Activated naive CD4-positive, alpha-beta T cell treated with anti-CD3 and anti-CD28 coated beads for 36 hours (primary cell): ENCODE measurements at regions of chr1 and their contacts with region 1.

Region 1: GRCh38 chr1:8423650-8424538 is 106.0 kb downstream of the SLC45A1 start:
- DNase-seq: peak; percentile 62
- H3K4me3 Mint-ChIP-seq: peak overlapping the region; percentile 85
- H3K27ac Mint-ChIP-seq: peak overlapping the region; percentile 97
- H3K4me1 Mint-ChIP-seq: peaks cover 38% of the 10 kb centered on the region
- H3K27me3 Mint-ChIP-seq: no peaks in the 10 kb centered on the region

Region 2: DNA sequence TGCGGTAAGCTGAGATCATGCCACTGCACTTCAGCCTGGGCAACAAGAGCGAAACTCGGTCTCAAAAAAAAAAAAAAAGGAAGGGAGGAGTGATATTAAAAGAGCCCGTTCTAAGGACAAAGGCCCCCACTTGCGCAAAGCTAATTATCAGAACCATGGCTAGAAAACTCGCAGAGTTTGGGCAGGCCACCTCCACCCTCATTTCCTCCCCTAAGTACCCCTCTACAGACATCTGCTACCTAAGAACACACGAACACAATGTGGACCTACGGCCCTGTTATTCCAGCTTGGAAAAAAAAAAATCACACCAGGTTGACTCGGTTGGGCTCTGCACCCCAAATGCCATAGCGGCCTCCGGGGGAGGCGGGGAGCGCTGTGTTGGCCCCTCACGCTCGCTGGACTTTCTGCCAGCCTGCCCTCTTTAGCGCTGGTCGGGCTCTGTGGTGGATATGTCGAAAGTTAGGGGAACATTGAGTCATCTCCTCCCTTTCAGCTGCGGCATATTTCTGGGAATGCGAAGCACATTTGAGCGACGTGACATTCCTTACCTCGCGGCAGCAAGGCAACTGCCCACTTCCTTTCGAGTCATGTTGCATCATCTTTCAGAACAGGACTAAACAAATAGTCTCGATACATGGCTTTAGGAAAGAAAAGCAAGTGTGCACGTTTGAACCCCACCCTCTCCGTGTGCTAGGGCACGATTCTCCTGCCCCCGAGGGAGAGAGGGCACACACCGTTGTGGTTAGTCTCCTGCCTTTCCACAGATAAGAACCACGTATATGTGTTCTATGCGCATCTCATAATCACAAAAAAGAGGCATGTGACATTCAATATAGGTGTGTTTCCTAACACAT is 212.1 kb before region 1 on chr1:
- CTCF ChIA-PET with region 1: no interaction called
- intact Hi-C with region 1: no loop called
- DNase-seq: peak; percentile 22
- H3K4me3 Mint-ChIP-seq: no peak overlapping the region
- H3K27ac Mint-ChIP-seq: no peak overlapping the region
- H3K4me1 Mint-ChIP-seq: peaks cover 15% of the 10 kb centered on the region
- H3K27me3 Mint-ChIP-seq: peaks cover 30% of the 10 kb centered on the region

Region 3: DNA sequence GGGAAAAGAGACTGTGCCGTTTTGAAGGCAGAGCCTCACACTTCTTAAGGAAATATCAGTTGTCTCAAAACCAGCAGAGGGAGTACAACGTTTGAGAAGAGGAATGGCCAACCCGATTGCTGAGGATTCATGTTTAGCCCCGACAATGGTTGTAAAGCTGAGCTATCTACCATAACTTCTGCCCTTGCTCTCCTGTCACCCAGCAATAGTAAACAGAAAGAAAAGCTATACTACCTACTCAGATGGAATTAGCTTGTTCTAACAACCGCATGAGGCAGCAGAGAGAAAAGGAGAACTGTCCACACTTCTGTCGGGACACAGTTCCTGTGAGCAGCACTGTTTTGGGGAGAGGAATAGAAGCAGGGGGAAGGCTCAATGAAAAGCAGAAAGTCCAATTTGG is 14.8 kb before region 1 on chr1:
- CTCF ChIA-PET with region 1: interaction called, 39 read pairs
- intact Hi-C with region 1: loop called (anchors 2 kb)
- DNase-seq: peak; percentile 36
- H3K4me3 Mint-ChIP-seq: peak overlapping the region; percentile 47
- H3K27ac Mint-ChIP-seq: peak overlapping the region; percentile 67
- H3K4me1 Mint-ChIP-seq: peaks cover 70% of the 10 kb centered on the region
- H3K27me3 Mint-ChIP-seq: no peaks in the 10 kb centered on the region

Region 4: DNA sequence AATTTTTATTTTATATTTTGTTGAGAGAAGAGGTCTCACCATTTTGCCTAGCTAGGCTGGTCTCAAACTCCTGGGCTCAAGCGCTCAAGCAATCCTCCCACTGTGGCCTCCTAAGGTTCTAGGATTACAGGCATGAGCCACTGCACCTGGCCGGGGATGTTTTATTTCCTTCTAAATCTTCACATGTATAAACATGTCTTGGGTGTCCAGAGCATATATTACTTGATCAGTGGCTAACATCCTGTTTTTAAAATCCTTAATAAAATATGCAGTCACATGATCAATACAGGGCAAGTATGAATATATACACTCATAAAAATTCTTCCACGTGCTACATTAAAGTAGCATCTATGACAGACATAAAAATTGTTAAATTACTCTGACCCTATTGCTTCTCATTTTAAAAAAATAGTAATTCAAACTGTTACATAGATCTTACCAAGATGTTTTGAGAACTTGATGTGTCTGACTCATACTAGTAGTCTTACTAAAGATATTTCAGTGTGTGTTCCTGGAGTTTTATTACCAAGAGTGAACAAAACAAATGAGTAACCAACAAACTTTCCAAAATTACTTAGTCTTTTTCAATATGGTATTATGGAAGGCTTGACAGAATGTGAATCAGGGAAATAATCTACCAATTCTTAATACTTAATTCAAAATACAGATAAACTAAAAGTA is 116.5 kb after region 1 on chr1:
- CTCF ChIA-PET with region 1: no interaction called
- intact Hi-C with region 1: no loop called
- DNase-seq: no peak
- H3K4me3 Mint-ChIP-seq: no peak overlapping the region
- H3K27ac Mint-ChIP-seq: peak overlapping the region; percentile 56
- H3K4me1 Mint-ChIP-seq: peaks cover 32% of the 10 kb centered on the region
- H3K27me3 Mint-ChIP-seq: no peaks in the 10 kb centered on the region